Right ventricle myocardium inferior (tissue), 1 donor: ENCODE measurements at regions of chr6 and their contacts with region 1.

Region 1: GRCh38 chr6:160992061-160992979 is 751 bp downstream of the MAP3K4 start:
- DNase-seq: no peak
- ATAC-seq: peak; percentile 67

Region 2: DNA sequence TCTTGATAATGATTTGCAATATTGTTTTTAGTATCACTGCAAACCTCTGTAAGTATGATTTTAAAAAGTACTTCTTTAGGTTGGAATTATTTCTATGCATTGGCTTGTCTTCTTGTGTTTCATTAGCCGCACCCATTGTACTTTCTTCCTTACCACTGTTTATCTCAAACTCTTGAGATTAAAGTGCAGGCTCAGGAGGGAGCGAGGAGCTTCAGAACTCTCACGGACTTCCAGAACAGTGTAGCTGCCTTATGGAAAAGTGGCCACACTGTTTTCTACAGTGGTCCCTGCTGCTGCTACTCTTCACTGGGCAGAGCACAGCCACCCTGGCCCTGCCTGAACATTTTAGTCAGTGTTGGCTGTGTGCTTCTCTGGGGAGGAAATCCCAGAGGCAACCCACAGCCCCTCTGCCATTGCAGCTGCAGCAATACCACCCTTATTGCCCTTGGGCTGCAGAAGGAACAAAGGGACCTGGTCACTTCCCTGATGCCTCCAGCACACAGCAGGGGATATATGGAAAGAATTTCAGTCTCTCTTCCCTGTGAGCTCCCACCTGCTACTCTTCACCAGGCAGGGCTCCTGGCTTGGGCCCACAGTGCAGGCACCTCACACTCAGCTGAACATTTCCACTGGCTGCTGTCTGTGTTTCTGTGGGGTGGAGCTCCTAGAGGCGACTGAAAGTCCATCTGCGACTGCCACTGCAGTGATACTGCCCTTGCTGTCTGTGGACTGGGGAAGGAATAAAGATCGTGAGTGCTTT is 92.5 kb before region 1 on chr6:
- intact Hi-C with region 1: no loop called
- DNase-seq: no peak
- ATAC-seq: no peak

Region 3: GRCh38 chr6:161057103-161058091 is 65.1 kb after region 1 on chr6:
- intact Hi-C with region 1: no loop called
- DNase-seq: no peak
- ATAC-seq: no peak

Region 4: GRCh38 chr6:161074496-161075121 is 82.3 kb after region 1 on chr6:
- intact Hi-C with region 1: loop called (anchors 5 kb)
- DNase-seq: no peak
- ATAC-seq: peak; percentile 73

Region 5: DNA sequence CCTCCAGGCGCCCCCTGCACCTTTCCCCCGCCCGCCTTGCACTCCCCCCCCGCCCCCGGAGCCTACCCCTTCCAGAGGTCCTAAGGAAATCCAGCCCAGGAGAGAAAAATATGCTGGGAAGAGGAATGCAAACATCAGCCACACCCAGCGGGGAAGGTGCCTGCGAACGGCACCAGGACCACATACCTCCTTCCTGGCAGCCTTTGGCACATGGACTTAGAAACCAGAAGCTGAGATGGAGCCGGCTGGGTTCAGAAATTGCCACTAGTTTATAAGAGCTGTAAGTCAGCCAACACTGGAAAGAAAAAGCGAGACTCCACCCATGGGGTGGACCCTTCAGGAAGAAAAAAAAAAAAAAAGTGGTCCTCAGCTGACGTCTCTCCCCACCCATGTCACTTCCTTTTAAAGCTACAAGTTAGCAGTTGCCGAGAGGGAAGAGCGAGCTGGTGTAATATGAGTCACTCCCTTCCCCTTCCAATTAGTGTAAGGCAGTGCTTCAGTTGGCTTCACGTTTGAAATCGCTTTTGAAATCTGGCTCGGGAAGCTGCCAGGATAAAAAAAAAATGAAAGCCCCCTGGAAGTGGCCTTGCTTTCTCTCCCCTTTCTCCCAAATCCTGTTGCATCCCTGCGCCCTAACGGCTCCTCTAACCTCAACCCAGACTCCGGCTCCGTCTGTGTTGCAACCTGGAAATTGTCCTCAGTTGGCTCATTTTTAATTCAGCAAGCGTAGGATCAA is 281.6 kb after region 1 on chr6 and contains the start of gene AGPAT4:
- intact Hi-C with region 1: loop called (anchors 10 kb)
- DNase-seq: no peak
- ATAC-seq: peak; percentile 99
- total RNA-seq, gene AGPAT4: 2.4 TPM